ENCODE measurements at regions of chr17 and their contacts with region 1.

Region 1: GRCh38 chr17:56034201-56034635 is 119.1 kb upstream of the ANKFN1 start:
- DNase-seq: no peak
- H3K4me3 ChIP-seq: no peak overlapping the region
- H3K27ac ChIP-seq: no peak overlapping the region
- H3K4me1 ChIP-seq: no peaks in the 10 kb centered on the region
- H3K27me3 ChIP-seq: peaks cover 0 to 4% (median 0%) of the 10 kb centered on the region in 7 donors
- CTCF ChIP-seq: no peak
- POLR2A ChIP-seq: no peak

Region 2: GRCh38 chr17:55889271-55889670 is 144.9 kb before region 1 on chr17:
- intact Hi-C with region 1: no loop called
- DNase-seq: no peak
- H3K4me3 ChIP-seq: no peak overlapping the region
- H3K27ac ChIP-seq: no peak overlapping the region
- H3K4me1 ChIP-seq: no peaks in the 10 kb centered on the region
- H3K27me3 ChIP-seq: no peaks in the 10 kb centered on the region
- CTCF ChIP-seq: no peak
- POLR2A ChIP-seq: no peak

Region 3: GRCh38 chr17:56099649-56100048 is 65.4 kb after region 1 on chr17:
- intact Hi-C with region 1: loop called (anchors 10 kb)
- DNase-seq: no peak
- H3K4me3 ChIP-seq: no peak overlapping the region
- H3K27ac ChIP-seq: no peak overlapping the region
- H3K4me1 ChIP-seq: no peaks in the 10 kb centered on the region
- H3K27me3 ChIP-seq: peaks cover 0 to 4% (median 0%) of the 10 kb centered on the region in 7 donors
- CTCF ChIP-seq: no peak
- POLR2A ChIP-seq: no peak